Motor neuron (in vitro differentiated cells): ENCODE measurements at regions of chr16 and their contacts with region 1.

Region 1: DNA sequence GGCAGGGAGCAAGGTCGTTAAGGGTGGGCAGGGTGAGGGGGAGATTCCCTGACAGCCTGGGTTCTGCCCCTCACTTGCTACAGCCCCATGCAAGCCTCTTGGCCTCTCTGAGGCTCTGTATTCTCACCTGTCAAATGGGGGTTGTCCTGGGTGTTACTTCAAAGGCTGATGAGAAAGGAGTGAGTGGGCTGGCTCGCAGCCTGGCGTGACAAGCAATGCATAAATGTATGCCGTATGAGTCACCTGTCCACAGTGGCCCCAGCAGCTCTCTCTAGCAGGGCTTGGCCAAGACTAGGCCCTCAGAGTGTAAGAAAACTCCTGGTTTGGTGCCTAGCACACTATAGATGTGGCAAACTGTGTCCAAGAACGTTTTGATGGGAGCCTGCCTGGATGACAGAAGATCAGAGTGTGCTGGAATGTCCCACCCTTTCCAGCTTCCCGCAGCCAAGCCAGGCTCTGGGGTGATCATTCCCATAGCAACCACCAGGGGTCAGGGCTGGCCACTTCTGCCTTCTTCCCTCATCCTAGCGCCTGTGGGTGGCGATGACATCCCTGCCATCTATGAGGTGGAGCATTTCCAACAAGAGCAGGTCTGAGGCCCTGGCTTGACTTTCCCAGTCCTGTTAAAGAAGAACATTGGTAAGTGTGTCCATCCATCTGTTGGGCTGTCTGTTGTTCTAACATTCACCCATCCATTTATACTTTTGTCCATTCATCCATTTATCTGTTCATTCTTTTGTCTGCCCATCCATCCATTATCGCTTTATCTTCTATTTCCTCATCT is 37.2 kb upstream of the ADGRG1 start:
- ATAC-seq: peak; percentile 88 to 99 (median 94)
- H3K4me3 ChIP-seq: no peak overlapping the region
- H3K27ac ChIP-seq: no peak overlapping the region
- H3K4me1 ChIP-seq: peaks cover 0 to 2% of the 10 kb centered on the region in 2 donors

Region 2: GRCh38 chr16:57734925-57735754 is 143.9 kb after region 1 on chr16:
- in situ Hi-C with region 1: loop called in 1 of 9 experiments (anchors 25 kb)
- ATAC-seq: peak; percentile 82 to 92 (median 90)
- H3K4me3 ChIP-seq: peak overlapping the region; percentile 59 to 94 (median 80)
- H3K27ac ChIP-seq: peak overlapping the region; percentile 85 to 90
- H3K4me1 ChIP-seq: peaks cover 12 to 18% of the 10 kb centered on the region in 2 donors